K562 (cell line): ENCODE measurements at regions of chr11 and their contacts with region 1.

Region 1: GRCh38 chr11:65448418-65449105 is 26.0 kb downstream of the NEAT1 start:
- DNase-seq: peak; percentile 73 to 90 (median 78)
- ATAC-seq: peak; percentile 82
- H3K4me3 ChIP-seq: no peak overlapping the region
- H3K27ac ChIP-seq: peak overlapping the region; percentile 64
- H3K4me1 ChIP-seq: peaks cover 17 to 46% of the 10 kb centered on the region in 2 experiments; a peak in 4 of 5 replicates
- H3K27me3 ChIP-seq: no peaks in the 10 kb centered on the region
- CTCF ChIP-seq: no peak
- EP300 ChIP-seq: no peak
- POLR2A ChIP-seq: 0 out of 2 replicates have a peak, but pooled peaks have one; percentile 25
- RAD21 ChIP-seq: no peak

Region 2: DNA sequence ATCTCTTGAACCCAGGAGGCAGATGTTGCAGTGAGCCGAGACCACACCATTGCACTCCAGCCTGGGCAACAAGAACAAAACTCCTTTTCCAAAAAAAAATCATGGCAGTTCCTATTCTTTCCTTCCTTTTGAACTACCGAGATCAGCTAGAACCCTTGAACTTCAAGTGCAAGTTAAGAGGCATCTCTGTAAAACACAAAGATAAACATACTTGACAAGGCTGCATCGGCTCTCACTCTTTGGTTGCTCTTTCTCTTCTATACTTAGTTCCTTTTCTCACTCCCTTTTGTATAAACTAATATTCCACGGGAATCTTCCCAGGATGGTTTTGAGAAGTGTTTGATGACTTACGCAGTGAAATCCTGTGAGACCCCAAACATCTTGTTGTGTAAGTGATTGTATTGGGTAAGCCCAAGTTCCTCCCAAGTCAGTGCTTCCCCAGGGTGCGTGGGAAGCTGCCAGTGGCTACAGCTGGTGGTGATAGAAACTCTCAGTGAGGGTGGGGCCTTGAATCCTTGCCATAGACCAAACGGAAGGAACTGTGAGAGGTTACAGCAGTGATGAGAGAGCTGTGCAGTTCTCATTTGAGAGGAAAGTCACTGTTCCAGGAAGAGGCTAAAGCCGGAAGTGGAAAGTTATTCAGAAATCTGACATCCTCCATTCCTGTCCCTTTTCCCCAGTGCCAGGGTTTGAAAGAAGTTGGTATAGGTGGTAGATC is 158.0 kb before region 1 on chr11:
- CTCF ChIA-PET with region 1: no interaction called
- POLR2A ChIA-PET with region 1: no interaction called
- in situ Hi-C with region 1: no loop called
- intact Hi-C with region 1: no loop called
- DNase-seq: peak; percentile 34 to 56 (median 46)
- ATAC-seq: peak; percentile 84
- H3K4me3 ChIP-seq: no peak overlapping the region
- H3K27ac ChIP-seq: peak overlapping the region; percentile 24; the same call in 1 of the 3 replicates
- H3K4me1 ChIP-seq: peaks cover 2 to 20% of the 10 kb centered on the region in 2 experiments; a peak in 4 of 5 replicates
- H3K27me3 ChIP-seq: no peaks in the 10 kb centered on the region
- CTCF ChIP-seq: no peak
- EP300 ChIP-seq: no peak
- POLR2A ChIP-seq: no peak
- RAD21 ChIP-seq: no peak

Region 3: GRCh38 chr11:65432686-65433582 is 15.6 kb before region 1 on chr11:
- CTCF ChIA-PET with region 1: no interaction called
- POLR2A ChIA-PET with region 1: interaction called, 42 read pairs
- in situ Hi-C with region 1: no loop called
- intact Hi-C with region 1: no loop called
- DNase-seq: peak in 1 of 4 experiments; percentile 62
- ATAC-seq: no peak
- H3K4me3 ChIP-seq: no peak overlapping the region
- H3K27ac ChIP-seq: no peak overlapping the region
- H3K4me1 ChIP-seq: peaks cover 3 to 29% of the 10 kb centered on the region in 2 experiments; a peak in 4 of 5 replicates
- H3K27me3 ChIP-seq: no peaks in the 10 kb centered on the region
- CTCF ChIP-seq: peak; percentile 27 to 61 (median 32); a peak in 3 of 6 replicates
- EP300 ChIP-seq: no peak
- POLR2A ChIP-seq: peak; percentile 64
- RAD21 ChIP-seq: peak; percentile 59 to 71

Region 4: GRCh38 chr11:65477149-65477965 is 28.8 kb after region 1 on chr11:
- CTCF ChIA-PET with region 1: no interaction called
- POLR2A ChIA-PET with region 1: interaction called, 12 read pairs
- in situ Hi-C with region 1: no loop called
- intact Hi-C with region 1: no loop called
- DNase-seq: peak; percentile 95 to 98 (median 96)
- ATAC-seq: peak; percentile 80
- H3K4me3 ChIP-seq: peak overlapping the region; percentile 93
- H3K27ac ChIP-seq: peak overlapping the region; percentile 99
- H3K4me1 ChIP-seq: peaks cover 36 to 59% of the 10 kb centered on the region in 2 experiments
- H3K27me3 ChIP-seq: no peaks in the 10 kb centered on the region
- CTCF ChIP-seq: no peak
- EP300 ChIP-seq: peak; percentile 70
- POLR2A ChIP-seq: peak; percentile 92
- RAD21 ChIP-seq: peak in 1 of 2 experiments; percentile 5; a peak in 1 of 4 replicates